ENCODE measurements at regions of chrX and their contacts with region 1.

Region 1: DNA sequence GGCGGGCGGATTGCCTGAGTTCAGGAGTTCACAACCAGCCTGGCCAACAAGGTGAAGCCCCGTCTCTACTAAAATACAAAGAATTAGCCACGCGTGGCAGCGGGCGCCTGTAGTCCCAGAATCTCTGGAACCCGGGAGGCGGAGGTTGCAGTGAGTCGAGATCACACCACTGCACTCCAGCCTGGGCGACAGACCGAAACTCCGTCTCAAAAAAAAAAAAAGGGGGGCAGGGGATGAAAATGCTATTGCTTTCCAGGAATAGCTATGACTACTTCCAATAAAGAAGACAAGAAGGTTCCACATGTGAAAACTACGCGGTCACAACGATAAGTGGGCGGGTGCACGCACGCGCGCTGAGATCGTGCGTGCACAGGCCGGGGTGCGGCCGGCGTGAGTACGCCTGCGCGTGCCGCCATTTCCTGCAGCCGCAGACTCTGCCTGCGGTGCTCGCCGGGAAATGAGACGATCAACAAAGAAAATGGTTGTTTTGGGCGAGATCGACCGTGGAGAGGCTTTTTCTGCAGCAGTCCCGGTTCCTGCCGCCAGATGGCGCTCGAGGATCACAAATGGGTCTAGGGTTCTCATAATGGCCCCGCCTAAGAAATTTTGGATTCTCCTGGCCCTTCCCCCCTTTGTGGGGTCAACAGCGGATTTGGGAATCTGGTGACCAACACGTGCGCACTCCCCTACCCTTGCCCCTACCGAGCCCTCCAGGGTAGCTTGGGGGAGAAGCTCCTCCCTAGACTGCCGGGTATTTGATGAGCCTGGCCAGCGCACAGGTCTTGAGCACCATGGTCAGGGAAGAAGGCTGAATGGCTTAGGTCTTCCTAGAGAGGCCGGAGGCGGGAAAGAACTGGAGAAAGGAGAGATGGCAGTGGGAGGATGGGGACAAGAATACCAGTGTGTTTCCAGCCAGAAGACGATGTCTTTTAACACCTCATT is 35.1 kb downstream of the PNMA5 start:
- DNase-seq: peak; percentile 84 to 96 (median 90)
- ATAC-seq: peak; percentile 97
- H3K4me3 ChIP-seq: peak overlapping the region; percentile 43
- H3K4me3 Mint-ChIP-seq: peak overlapping the region; percentile 35
- H3K27ac ChIP-seq: peak overlapping the region; percentile 35 to 62
- H3K27ac Mint-ChIP-seq: peak overlapping the region; percentile 86
- H3K4me1 ChIP-seq: peaks cover 13% of the 10 kb centered on the region
- H3K4me1 Mint-ChIP-seq: peaks cover 6% of the 10 kb centered on the region
- H3K27me3 ChIP-seq: no peaks in the 10 kb centered on the region
- H3K27me3 Mint-ChIP-seq: no peaks in the 10 kb centered on the region
- CTCF ChIP-seq: peak; percentile 67

Region 2: DNA sequence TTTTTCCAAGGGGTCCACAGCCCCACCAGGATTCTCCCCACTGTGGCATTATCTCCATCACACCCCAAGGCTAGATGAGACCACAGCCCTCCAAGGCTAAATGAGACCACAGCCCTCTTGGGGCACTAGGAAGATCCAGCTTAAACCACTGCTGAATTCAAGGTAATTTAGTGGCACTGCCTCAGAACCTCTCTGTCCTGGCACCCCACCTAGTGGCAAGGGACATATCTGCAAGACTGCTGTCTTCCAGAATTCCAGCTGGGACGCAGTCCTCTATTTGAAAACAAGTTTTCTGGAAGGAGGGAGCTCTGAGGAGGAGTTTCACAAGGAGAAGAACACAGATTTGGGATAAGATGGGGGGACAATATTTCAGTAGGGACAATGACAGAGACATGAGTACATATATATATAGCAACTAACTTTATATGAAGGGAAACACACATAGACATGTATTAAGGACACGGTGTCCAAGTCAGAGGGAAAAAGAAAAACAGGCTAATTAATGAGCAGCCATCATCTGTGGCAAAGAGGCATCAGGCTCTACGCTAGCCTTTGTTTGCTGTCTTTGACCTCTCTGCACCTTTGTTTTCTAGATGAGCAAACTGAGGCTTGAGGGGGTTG is 137.5 kb before region 1 on chrX:
- CTCF ChIA-PET with region 1: no interaction called
- POLR2A ChIA-PET with region 1: no interaction called
- intact Hi-C with region 1: no loop called
- DNase-seq: peak in 2 of 14 experiments; percentile 11 to 20
- ATAC-seq: no peak
- H3K4me3 ChIP-seq: no peak overlapping the region
- H3K4me3 Mint-ChIP-seq: no peak overlapping the region
- H3K27ac ChIP-seq: no peak overlapping the region
- H3K27ac Mint-ChIP-seq: no peak overlapping the region
- H3K4me1 ChIP-seq: no peaks in the 10 kb centered on the region
- H3K4me1 Mint-ChIP-seq: no peaks in the 10 kb centered on the region
- H3K27me3 ChIP-seq: peaks cover 0 to 10% of the 10 kb centered on the region in 2 experiments
- H3K27me3 Mint-ChIP-seq: peaks cover 8% of the 10 kb centered on the region
- CTCF ChIP-seq: no peak

Region 3: GRCh38 chrX:152941328-152942106 is 17.3 kb before region 1 on chrX:
- CTCF ChIA-PET with region 1: interaction called, 10 read pairs
- POLR2A ChIA-PET with region 1: interaction called, 10 read pairs
- intact Hi-C with region 1: loop called in 1 of 2 experiments (anchors 1 kb)
- DNase-seq: peak; percentile 80 to 96 (median 88)
- ATAC-seq: peak; percentile 97
- H3K4me3 ChIP-seq: peak overlapping the region; percentile 57
- H3K4me3 Mint-ChIP-seq: peak overlapping the region; percentile 86
- H3K27ac ChIP-seq: peak overlapping the region; percentile 56 to 62
- H3K27ac Mint-ChIP-seq: peak overlapping the region; percentile 89
- H3K4me1 ChIP-seq: peaks cover 14% of the 10 kb centered on the region
- H3K4me1 Mint-ChIP-seq: peaks cover 9% of the 10 kb centered on the region
- H3K27me3 ChIP-seq: no peaks in the 10 kb centered on the region
- H3K27me3 Mint-ChIP-seq: no peaks in the 10 kb centered on the region
- CTCF ChIP-seq: peak; percentile 66

Region 4: GRCh38 chrX:153470435-153471363 is 511.9 kb after region 1 on chrX and contains the start of gene HAUS7:
- CTCF ChIA-PET with region 1: no interaction called
- POLR2A ChIA-PET with region 1: no interaction called
- intact Hi-C with region 1: loop called in 1 of 2 experiments (anchors 5 kb)
- DNase-seq: peak; percentile 81 to 95 (median 86)
- ATAC-seq: peak; percentile 83
- H3K4me3 ChIP-seq: peak within 1 kb of the TSS; percentile 75
- H3K4me3 Mint-ChIP-seq: peak within 1 kb of the TSS; percentile 87
- H3K27ac ChIP-seq: peak within 1 kb of the TSS; percentile 29 to 46
- H3K27ac Mint-ChIP-seq: peak within 1 kb of the TSS; percentile 84
- H3K4me1 ChIP-seq: peaks cover 40% of the 10 kb centered on the region
- H3K4me1 Mint-ChIP-seq: peaks cover 6% of the 10 kb centered on the region
- H3K27me3 ChIP-seq: no peaks in the 10 kb centered on the region
- H3K27me3 Mint-ChIP-seq: no peaks in the 10 kb centered on the region
- CTCF ChIP-seq: peak; percentile 56
- total RNA-seq, gene HAUS7: 24.4 to 25.6 TPM

Region 5: GRCh38 chrX:153662266-153662665 is 703.5 kb after region 1 on chrX:
- CTCF ChIA-PET with region 1: no interaction called
- POLR2A ChIA-PET with region 1: no interaction called
- intact Hi-C with region 1: loop called in 1 of 2 experiments (anchors 1 kb)
- DNase-seq: peak; percentile 30 to 77 (median 53)
- ATAC-seq: no peak
- H3K4me3 ChIP-seq: peak overlapping the region; percentile 25
- H3K4me3 Mint-ChIP-seq: no peak overlapping the region
- H3K27ac ChIP-seq: no peak overlapping the region
- H3K27ac Mint-ChIP-seq: no peak overlapping the region
- H3K4me1 ChIP-seq: peaks cover 6% of the 10 kb centered on the region
- H3K4me1 Mint-ChIP-seq: peaks cover 5% of the 10 kb centered on the region
- H3K27me3 ChIP-seq: peaks cover 0 to 2% of the 10 kb centered on the region in 2 experiments
- H3K27me3 Mint-ChIP-seq: peaks cover 15% of the 10 kb centered on the region
- CTCF ChIP-seq: peak; percentile 51

Region 6: DNA sequence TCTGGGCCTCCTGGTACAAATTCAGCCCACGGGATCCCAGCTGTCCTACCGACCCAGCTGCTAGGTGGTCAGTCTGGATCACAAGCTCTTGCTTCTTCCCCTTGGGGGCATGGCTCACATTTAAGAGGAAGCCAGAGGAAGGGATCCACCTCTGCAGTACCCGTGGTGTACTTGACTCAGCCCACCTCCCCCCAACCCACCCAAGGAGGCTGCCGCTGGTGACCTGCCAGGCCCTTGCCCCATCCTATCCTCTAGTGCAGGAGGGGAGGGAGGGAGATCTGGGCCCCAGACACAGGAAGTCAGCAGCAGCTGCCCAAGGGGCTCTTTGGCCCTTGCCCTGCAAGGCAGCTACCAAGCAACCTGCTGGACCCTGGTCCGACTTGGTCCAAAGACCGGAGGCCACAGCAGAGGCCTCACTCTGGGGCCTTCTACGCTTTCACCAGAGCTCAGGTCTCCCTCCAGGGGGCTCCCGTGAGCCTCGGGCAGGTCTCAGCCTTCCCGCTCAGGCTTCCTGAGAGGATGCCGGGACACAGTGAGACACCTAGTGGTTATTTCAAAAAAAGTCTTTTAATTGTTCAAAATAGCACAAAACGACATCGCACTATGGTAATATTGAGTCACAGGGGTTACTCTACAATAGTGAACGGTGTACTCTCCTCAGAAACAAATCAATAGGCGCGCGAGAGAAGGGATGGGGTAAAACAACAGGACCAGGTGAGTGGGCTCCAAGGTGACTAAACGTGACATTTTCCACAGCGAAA is 988.4 kb after region 1 on chrX:
- CTCF ChIA-PET with region 1: no interaction called
- POLR2A ChIA-PET with region 1: no interaction called
- intact Hi-C with region 1: loop called (anchors 5 to 10 kb)
- DNase-seq: peak; percentile 62 to 89 (median 74)
- ATAC-seq: peak; percentile 89
- H3K4me3 ChIP-seq: no peak overlapping the region
- H3K4me3 Mint-ChIP-seq: peak overlapping the region; percentile 39
- H3K27ac ChIP-seq: no peak overlapping the region
- H3K27ac Mint-ChIP-seq: peak overlapping the region; percentile 57
- H3K4me1 ChIP-seq: peaks cover 47% of the 10 kb centered on the region
- H3K4me1 Mint-ChIP-seq: peaks cover 10% of the 10 kb centered on the region
- H3K27me3 ChIP-seq: no peaks in the 10 kb centered on the region
- H3K27me3 Mint-ChIP-seq: no peaks in the 10 kb centered on the region
- CTCF ChIP-seq: peak; percentile 84

Measured in CD4-positive, alpha-beta T cell (primary cell).